ENCODE measurements at regions of chr9 and their contacts with region 1.

Region 1: GRCh38 chr9:122810306-122810946 is 10.5 kb downstream of the OR1K1 start:
- DNase-seq: peak; percentile 59
- H3K4me3 Mint-ChIP-seq: no peak overlapping the region
- H3K27ac Mint-ChIP-seq: no peak overlapping the region
- H3K4me1 Mint-ChIP-seq: peaks cover 34% of the 10 kb centered on the region
- H3K27me3 Mint-ChIP-seq: no peaks in the 10 kb centered on the region

Region 2: GRCh38 chr9:122051351-122052321 is 758.8 kb before region 1 on chr9:
- intact Hi-C with region 1: loop called (anchors 1 kb)
- DNase-seq: no peak
- H3K4me3 Mint-ChIP-seq: no peak overlapping the region
- H3K27ac Mint-ChIP-seq: peak overlapping the region; percentile 82
- H3K4me1 Mint-ChIP-seq: peaks cover 9% of the 10 kb centered on the region
- H3K27me3 Mint-ChIP-seq: peaks cover 6% of the 10 kb centered on the region

Region 3: GRCh38 chr9:122125158-122125508 is 685.3 kb before region 1 on chr9:
- intact Hi-C with region 1: loop called (anchors 1 kb)
- DNase-seq: peak; percentile 60
- H3K4me3 Mint-ChIP-seq: no peak overlapping the region
- H3K27ac Mint-ChIP-seq: no peak overlapping the region
- H3K4me1 Mint-ChIP-seq: peaks cover 5% of the 10 kb centered on the region
- H3K27me3 Mint-ChIP-seq: peaks cover 29% of the 10 kb centered on the region

Region 4: DNA sequence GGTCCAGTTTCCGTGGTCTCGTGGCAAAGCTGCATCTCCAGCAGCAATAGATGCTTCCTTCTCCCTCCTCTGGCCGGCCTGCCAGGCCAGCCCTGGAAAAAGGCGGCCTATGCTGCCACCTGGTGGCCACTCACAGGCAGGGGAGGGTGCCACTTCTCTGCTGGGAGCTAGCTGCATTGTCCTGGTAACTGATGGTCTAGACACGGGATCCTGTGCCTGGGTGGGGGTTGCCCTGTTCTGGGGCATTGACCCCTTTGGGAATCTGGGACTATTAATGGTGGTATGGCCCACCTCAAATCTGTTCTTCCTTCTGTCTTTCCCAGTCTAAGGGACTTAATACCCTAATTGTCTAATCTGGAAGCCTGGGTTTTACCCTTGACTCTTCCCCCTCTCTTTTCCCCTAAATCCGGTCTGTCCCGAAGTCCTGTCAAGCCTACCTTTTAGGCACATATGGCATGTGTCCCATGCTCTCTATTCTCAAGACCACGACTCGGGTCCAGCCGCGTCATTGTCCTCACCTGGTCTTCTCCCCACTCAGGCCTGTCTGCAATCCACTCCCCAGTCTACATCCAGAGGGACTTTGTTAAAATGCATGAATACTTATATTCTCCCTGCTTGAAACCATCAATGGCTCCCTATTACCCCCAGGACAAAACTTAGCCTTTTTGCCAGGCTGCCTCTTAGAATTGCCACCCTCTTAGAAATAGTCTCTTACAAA is 459.6 kb before region 1 on chr9:
- intact Hi-C with region 1: loop called (anchors 1 kb)
- DNase-seq: peak; percentile 63
- H3K4me3 Mint-ChIP-seq: no peak overlapping the region
- H3K27ac Mint-ChIP-seq: no peak overlapping the region
- H3K4me1 Mint-ChIP-seq: peaks cover 15% of the 10 kb centered on the region
- H3K27me3 Mint-ChIP-seq: peaks cover 27% of the 10 kb centered on the region

Region 5: DNA sequence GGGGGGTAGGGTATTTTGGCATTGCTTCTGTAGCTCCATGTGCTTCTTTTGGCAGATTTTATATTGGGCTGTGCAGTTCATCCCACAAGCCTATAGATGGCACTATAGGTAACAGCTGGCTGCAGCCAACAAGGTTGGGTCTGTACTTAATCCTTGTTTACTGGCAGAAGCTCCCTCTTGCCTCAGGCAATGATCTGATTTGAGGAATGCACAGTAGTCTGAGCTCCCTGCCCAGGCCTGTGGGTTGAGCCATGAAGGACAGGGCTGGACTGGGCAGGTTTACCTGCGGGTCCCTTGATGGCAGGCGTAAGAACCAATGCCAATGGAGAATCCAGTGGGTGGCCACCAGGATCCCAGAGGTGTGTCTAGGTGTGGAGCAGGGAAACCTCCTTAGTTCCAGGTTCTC is 311.5 kb before region 1 on chr9:
- intact Hi-C with region 1: loop called (anchors 1 kb)
- DNase-seq: no peak
- H3K4me3 Mint-ChIP-seq: no peak overlapping the region
- H3K27ac Mint-ChIP-seq: no peak overlapping the region
- H3K4me1 Mint-ChIP-seq: no peaks in the 10 kb centered on the region
- H3K27me3 Mint-ChIP-seq: peaks cover 7% of the 10 kb centered on the region

Region 6: GRCh38 chr9:122723690-122724089 is 86.7 kb before region 1 on chr9 and contains the start of gene OR1L4:
- intact Hi-C with region 1: no loop called
- DNase-seq: no peak
- H3K4me3 Mint-ChIP-seq: no peak within 1 kb of the TSS
- H3K27ac Mint-ChIP-seq: no peak within 1 kb of the TSS
- H3K4me1 Mint-ChIP-seq: no peaks in the 10 kb centered on the region
- H3K27me3 Mint-ChIP-seq: peaks cover 2% of the 10 kb centered on the region
- total RNA-seq, gene OR1L4: not detected in 2 replicates

Region 7: GRCh38 chr9:123225374-123225813 is 415.0 kb after region 1 on chr9:
- intact Hi-C with region 1: loop called (anchors 1 kb)
- DNase-seq: peak; percentile 50
- H3K4me3 Mint-ChIP-seq: peak overlapping the region; percentile 24
- H3K27ac Mint-ChIP-seq: peak overlapping the region; percentile 68
- H3K4me1 Mint-ChIP-seq: peaks cover 23% of the 10 kb centered on the region
- H3K27me3 Mint-ChIP-seq: no peaks in the 10 kb centered on the region